Activated B cell treated with CpG ODN at 0.5 μM for 24 hours (primary cell): ENCODE measurements at regions of chr17 and their contacts with region 1.

Region 1: GRCh38 chr17:49779739-49780231 is 8.7 kb upstream of the KAT7 start:
- DNase-seq: no peak
- ATAC-seq: no peak
- H3K4me3 Mint-ChIP-seq: no peak overlapping the region
- H3K27ac Mint-ChIP-seq: no peak overlapping the region
- H3K4me1 Mint-ChIP-seq: no peaks in the 10 kb centered on the region
- H3K27me3 Mint-ChIP-seq: no peaks in the 10 kb centered on the region
- CTCF ChIP-seq: no peak

Region 2: DNA sequence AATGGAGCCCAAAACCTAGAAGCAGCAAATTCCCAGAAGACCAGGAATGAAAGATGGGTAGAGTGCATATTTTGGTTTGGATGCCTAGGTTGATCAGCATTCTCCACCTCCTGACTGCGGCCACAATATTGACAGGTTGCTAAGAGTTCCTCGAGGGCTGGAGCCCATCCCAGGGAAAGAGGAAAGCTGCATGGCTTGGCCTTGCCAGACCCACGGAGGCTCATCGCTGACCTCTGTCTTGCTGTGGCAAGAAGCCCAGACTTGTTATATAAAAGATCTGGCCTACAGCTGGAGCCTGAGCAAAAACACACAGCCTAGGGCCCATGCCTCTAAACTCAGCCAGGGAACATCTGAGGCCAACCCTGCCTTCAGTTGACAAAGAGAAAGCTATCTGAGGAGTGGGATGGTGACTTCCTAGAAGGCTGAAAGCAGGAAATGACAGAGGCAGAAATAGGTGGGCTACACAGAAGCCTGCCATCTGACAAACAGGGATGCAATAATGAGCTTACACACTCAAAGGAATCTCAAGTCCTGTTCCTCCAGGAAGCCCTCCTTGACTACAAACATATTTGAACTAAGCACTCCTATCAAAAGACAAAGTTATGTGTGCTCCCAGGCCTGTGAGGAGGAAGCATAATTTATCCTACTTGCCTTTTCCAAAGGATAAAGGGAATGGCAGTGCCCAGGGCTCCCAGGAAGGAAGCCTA is 49.6 kb before region 1 on chr17:
- CTCF ChIA-PET with region 1: no interaction called
- POLR2A ChIA-PET with region 1: interaction called, 11 read pairs
- intact Hi-C with region 1: no loop called
- DNase-seq: no peak
- ATAC-seq: no peak
- H3K4me3 Mint-ChIP-seq: no peak overlapping the region
- H3K27ac Mint-ChIP-seq: no peak overlapping the region
- H3K4me1 Mint-ChIP-seq: peaks cover 45% of the 10 kb centered on the region
- H3K27me3 Mint-ChIP-seq: no peaks in the 10 kb centered on the region
- CTCF ChIP-seq: no peak